K562 (cell line): ENCODE measurements at regions of chr22 and their contacts with region 1.

Region 1: DNA sequence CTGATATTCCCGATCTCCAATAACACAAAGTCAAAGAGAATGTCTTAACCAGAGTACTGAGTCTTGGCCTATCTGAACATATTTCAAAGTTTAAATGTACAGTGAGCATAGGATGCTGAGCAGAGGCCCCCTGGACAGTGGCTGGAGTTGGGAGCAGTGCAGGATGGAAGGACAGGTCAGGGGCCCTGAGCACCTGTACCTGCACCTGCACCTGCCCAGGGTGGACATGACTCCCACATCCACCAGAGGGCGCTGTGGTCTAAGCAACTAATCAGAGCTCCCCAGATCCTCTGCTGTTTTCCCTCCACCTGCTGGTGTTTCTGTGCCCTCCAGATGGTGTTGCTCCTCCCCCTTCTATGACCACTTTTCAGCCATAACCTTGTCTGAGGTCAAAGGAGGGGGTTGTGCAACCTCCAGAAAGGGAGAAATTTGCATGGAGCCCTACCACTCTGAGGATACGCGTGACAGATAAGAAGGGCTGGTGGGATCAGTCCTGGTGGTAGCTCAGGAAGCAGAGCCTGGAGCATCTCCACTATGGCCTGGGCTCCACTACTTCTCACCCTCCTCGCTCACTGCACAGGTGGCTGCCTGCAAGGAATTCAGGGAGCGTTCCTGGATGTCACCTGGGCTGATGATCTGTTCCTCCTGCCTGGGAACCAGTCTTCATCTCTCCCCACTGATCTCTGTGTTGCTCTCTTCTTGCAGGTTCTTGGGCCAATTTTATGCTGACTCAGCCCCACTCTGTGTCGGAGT is 49.1 kb upstream of the VPREB1 start:
- DNase-seq: peak; percentile 99 to 100 (median 100)
- ATAC-seq: peak; percentile 99
- H3K4me3 ChIP-seq: no peak overlapping the region
- H3K27ac ChIP-seq: no peak overlapping the region
- H3K4me1 ChIP-seq: peaks cover 0 to 3% of the 10 kb centered on the region in 2 experiments; a peak in 1 of 5 replicates
- H3K27me3 ChIP-seq: peaks cover 14 to 33% of the 10 kb centered on the region in 2 experiments; a peak in 4 of 5 replicates
- CTCF ChIP-seq: peak; percentile 100
- EP300 ChIP-seq: peak; percentile 69
- POLR2A ChIP-seq: no peak
- RAD21 ChIP-seq: peak; percentile 93 to 100

Region 2: DNA sequence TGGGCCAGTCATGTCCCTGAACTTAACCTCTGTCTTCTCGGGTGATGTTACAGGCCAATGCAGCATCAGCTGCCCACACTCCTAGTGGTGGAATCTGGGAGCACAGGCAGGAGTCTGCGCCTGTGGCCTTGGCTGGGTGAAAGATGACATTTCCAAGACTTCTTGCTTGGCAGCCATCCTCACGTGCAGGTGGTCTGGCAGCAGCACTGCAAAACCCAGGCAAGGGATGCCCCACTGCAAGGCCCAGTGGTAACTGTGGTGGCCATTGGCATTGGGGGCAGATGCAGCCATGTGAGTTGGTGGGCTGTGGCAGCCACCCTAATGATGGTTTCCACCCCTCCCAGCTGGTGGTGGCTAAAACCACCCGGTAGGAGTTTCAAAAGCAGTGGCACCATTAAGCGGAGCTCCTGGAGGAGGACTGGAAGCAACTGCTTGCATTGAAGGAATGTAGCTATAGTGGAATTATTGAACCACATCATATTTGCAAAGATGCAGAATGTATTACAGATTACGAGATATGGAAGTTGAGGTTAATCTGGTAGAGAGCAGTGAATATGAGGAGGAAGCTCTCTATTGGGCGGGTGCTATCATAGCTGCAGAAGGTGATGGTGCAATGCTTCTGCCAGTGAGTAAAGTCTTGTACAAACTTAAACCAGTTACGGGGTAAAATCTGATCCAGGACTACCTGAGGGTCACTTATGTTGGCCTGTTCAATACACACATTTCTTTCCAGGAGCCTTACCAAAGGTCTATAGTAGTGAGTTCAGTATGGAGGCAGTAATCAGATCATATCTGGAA is 92.2 kb before region 1 on chr22:
- CTCF ChIA-PET with region 1: interaction called, 19 read pairs
- POLR2A ChIA-PET with region 1: no interaction called
- in situ Hi-C with region 1: no loop called
- intact Hi-C with region 1: no loop called
- DNase-seq: peak; percentile 86 to 97 (median 93)
- ATAC-seq: peak; percentile 87
- H3K4me3 ChIP-seq: no peak overlapping the region
- H3K27ac ChIP-seq: no peak overlapping the region
- H3K4me1 ChIP-seq: peaks cover 0 to 2% of the 10 kb centered on the region in 2 experiments; a peak in 2 of 5 replicates
- H3K27me3 ChIP-seq: peaks cover 21 to 37% of the 10 kb centered on the region in 2 experiments
- CTCF ChIP-seq: no peak
- EP300 ChIP-seq: no peak
- POLR2A ChIP-seq: no peak
- RAD21 ChIP-seq: no peak

Region 3: GRCh38 chr22:22110548-22111266 is 84.7 kb before region 1 on chr22:
- CTCF ChIA-PET with region 1: interaction called, 3 read pairs
- POLR2A ChIA-PET with region 1: interaction called, 3 read pairs
- in situ Hi-C with region 1: no loop called
- intact Hi-C with region 1: loop called (anchors 2 kb)
- DNase-seq: peak; percentile 89 to 96 (median 94)
- ATAC-seq: peak; percentile 95
- H3K4me3 ChIP-seq: no peak overlapping the region
- H3K27ac ChIP-seq: 0 out of 3 replicates have a peak overlapping the region, but pooled peaks have one; percentile 2
- H3K4me1 ChIP-seq: peaks cover 13 to 36% of the 10 kb centered on the region in 2 experiments; a peak in 4 of 5 replicates
- H3K27me3 ChIP-seq: no peaks in the 10 kb centered on the region
- CTCF ChIP-seq: no peak
- EP300 ChIP-seq: no peak
- POLR2A ChIP-seq: no peak
- RAD21 ChIP-seq: peak in 1 of 2 experiments; percentile 35; a peak in 1 of 4 replicates

Region 4: GRCh38 chr22:22156716-22157347 is 38.6 kb before region 1 on chr22:
- CTCF ChIA-PET with region 1: interaction called, 9 read pairs
- POLR2A ChIA-PET with region 1: interaction called, 4 read pairs
- in situ Hi-C with region 1: no loop called
- intact Hi-C with region 1: loop called (anchors 1 kb)
- DNase-seq: peak; percentile 98 to 100 (median 99)
- ATAC-seq: peak; percentile 98
- H3K4me3 ChIP-seq: no peak overlapping the region
- H3K27ac ChIP-seq: peak overlapping the region; percentile 1; the same call in 1 of the 3 replicates
- H3K4me1 ChIP-seq: peaks cover 0 to 4% of the 10 kb centered on the region in 2 experiments; a peak in 1 of 5 replicates
- H3K27me3 ChIP-seq: peaks cover 8 to 9% of the 10 kb centered on the region in 2 experiments
- CTCF ChIP-seq: peak in 1 of 3 experiments; percentile 99; a peak in 2 of 6 replicates
- EP300 ChIP-seq: peak; percentile 79
- POLR2A ChIP-seq: no peak
- RAD21 ChIP-seq: no peak

Region 5: DNA sequence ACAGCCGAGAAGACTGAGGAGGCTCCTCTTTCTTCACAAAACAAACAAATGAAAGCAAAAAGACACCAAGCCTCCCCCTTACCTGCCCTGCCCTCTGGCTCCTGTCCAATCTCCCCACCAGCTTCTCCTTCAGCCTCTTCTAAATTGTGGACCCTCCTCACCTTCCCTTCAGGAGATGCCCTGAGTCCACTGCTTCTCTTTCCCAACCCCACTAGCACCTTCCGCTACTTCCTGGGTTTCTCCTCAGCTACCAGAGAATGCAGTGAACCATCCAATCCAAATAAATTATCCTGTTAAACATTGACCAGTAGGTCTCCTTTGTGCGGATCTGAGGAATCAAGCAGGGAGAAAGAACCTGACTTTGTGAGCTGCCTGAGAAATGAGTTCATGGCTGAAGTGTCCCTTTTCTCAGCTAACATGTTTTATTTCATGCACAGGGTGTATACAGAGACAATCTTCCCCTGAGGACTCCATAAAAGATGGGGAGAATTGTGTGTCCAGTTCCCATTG is 14.0 kb before region 1 on chr22:
- CTCF ChIA-PET with region 1: interaction called, 4 read pairs
- POLR2A ChIA-PET with region 1: interaction called, 61 read pairs
- in situ Hi-C with region 1: no loop called
- intact Hi-C with region 1: no loop called
- DNase-seq: no peak
- ATAC-seq: no peak; the same call in 2 of the 3 replicates
- H3K4me3 ChIP-seq: no peak overlapping the region
- H3K27ac ChIP-seq: no peak overlapping the region
- H3K4me1 ChIP-seq: no peaks in the 10 kb centered on the region
- H3K27me3 ChIP-seq: peaks cover 58 to 63% of the 10 kb centered on the region in 2 experiments
- CTCF ChIP-seq: no peak
- EP300 ChIP-seq: no peak
- POLR2A ChIP-seq: no peak
- RAD21 ChIP-seq: no peak

Region 6: DNA sequence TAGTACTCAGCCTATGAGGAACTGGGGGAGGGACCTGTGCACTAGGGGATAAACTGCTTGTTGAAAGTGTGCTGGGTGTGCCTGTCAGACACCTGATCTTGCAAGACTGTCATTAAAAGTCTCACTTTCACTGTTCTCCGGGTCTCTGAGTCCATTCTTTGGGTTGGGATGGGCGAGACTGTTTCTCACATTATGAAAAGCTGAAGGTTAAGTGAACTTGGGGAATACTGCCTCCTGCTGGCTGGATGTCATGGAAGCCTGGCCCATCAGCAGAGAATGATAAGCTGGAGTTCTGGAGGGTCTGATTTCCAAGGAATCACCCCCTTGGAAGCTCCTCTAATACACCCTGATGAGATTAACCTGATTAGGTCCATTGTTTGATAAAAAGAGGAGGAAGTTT is 40.1 kb after region 1 on chr22:
- CTCF ChIA-PET with region 1: interaction called, 8 read pairs
- POLR2A ChIA-PET with region 1: interaction called, 3 read pairs
- in situ Hi-C with region 1: no loop called
- intact Hi-C with region 1: loop called (anchors 1 kb)
- DNase-seq: peak; percentile 78 to 85 (median 82)
- ATAC-seq: peak; percentile 84
- H3K4me3 ChIP-seq: no peak overlapping the region
- H3K27ac ChIP-seq: no peak overlapping the region
- H3K4me1 ChIP-seq: no peaks in the 10 kb centered on the region
- H3K27me3 ChIP-seq: peaks cover 46 to 65% of the 10 kb centered on the region in 2 experiments
- CTCF ChIP-seq: peak; percentile 90 to 97 (median 96)
- EP300 ChIP-seq: no peak
- POLR2A ChIP-seq: no peak
- RAD21 ChIP-seq: peak in 1 of 2 experiments; percentile 90; a peak in 3 of 4 replicates

Region 7: DNA sequence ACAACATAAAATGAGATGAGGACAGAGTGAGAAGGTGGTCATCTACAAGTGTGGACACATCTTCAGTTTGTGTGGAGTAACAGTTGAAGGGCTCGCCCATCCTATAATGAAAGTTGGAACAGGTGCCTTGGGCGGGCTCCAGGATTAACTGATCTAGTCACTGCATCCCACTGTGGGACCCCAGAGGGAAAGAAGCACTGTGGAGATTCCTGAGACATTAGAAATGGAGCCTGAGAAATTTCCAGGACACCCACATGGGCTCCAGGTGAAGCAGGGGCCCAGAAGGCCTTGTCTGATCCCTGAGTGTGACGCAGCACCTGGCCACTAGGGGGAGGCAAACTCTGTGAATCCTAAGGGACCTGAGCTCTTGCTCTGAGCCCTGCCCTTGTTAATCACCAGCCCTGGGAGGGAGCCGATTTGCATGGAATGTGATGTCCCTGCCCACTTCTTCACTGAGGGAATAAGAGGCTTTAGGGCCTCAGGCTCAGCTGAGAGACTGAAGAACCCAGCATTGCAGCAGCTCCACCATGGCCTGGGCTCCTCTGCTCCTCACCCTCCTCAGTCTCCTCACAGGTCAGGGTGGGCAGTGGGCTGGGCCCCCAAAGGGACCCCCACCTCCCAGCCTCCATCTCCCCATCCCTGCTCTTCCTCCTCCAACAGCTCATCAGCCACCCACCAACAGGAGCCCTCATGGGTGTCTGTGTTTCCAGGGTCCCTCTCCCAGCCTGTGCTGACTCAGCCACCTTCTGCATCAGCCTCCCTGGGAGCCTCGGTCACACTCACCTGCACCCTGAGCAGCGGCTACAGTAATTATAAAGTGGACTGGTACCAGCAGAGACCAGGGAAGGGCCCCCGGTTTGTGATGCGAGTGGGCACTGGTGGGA is 147.5 kb after region 1 on chr22:
- CTCF ChIA-PET with region 1: interaction called, 13 read pairs
- POLR2A ChIA-PET with region 1: interaction called, 10 read pairs
- in situ Hi-C with region 1: no loop called
- intact Hi-C with region 1: no loop called
- DNase-seq: peak; percentile 95 to 99 (median 98)
- ATAC-seq: peak; percentile 98
- H3K4me3 ChIP-seq: no peak overlapping the region
- H3K27ac ChIP-seq: no peak overlapping the region
- H3K4me1 ChIP-seq: no peaks in the 10 kb centered on the region
- H3K27me3 ChIP-seq: peaks cover 11 to 33% of the 10 kb centered on the region in 2 experiments; a peak in 3 of 5 replicates
- CTCF ChIP-seq: peak in 2 of 3 experiments; percentile 99 to 100; a peak in 4 of 6 replicates
- EP300 ChIP-seq: no peak
- POLR2A ChIP-seq: no peak
- RAD21 ChIP-seq: peak in 1 of 2 experiments; percentile 92; a peak in 2 of 4 replicates

Region 8: GRCh38 chr22:22666307-22667091 is 471.1 kb after region 1 on chr22:
- CTCF ChIA-PET with region 1: no interaction called
- POLR2A ChIA-PET with region 1: no interaction called
- in situ Hi-C with region 1: no loop called
- intact Hi-C with region 1: no loop called
- DNase-seq: peak; percentile 82 to 90 (median 84)
- ATAC-seq: peak; percentile 93
- H3K4me3 ChIP-seq: no peak overlapping the region
- H3K27ac ChIP-seq: no peak overlapping the region
- H3K4me1 ChIP-seq: no peaks in the 10 kb centered on the region
- H3K27me3 ChIP-seq: peaks cover 2 to 35% of the 10 kb centered on the region in 2 experiments; a peak in 4 of 5 replicates
- CTCF ChIP-seq: no peak
- EP300 ChIP-seq: no peak
- POLR2A ChIP-seq: no peak
- RAD21 ChIP-seq: no peak